ENCODE measurements at regions of chr11 and their contacts with region 1.

Region 1: GRCh38 chr11:14358729-14359439 is at the start of gene RRAS2:
- DNase-seq: peak; percentile 90
- ATAC-seq: peak; percentile 91
- H3K4me3 ChIP-seq: peak within 1 kb of the TSS; percentile 65 to 94 (median 88)
- H3K4me3 Mint-ChIP-seq: peak within 1 kb of the TSS; percentile 91
- H3K27ac ChIP-seq: peak within 1 kb of the TSS; percentile 52 to 76
- H3K27ac Mint-ChIP-seq: peak within 1 kb of the TSS; percentile 87
- H3K4me1 ChIP-seq: peaks cover 28 to 36% of the 10 kb centered on the region in 2 donors
- H3K4me1 Mint-ChIP-seq: peaks cover 43% of the 10 kb centered on the region
- H3K27me3 ChIP-seq: no peaks in the 10 kb centered on the region
- H3K27me3 Mint-ChIP-seq: no peaks in the 10 kb centered on the region
- CTCF ChIP-seq: no peak
- total RNA-seq, gene RRAS2: 72.4 and 80.1 TPM in 2 replicates

Region 2: GRCh38 chr11:14300661-14301304 is 58.1 kb before region 1 on chr11:
- CTCF ChIA-PET with region 1: interaction called, 8 read pairs
- POLR2A ChIA-PET with region 1: no interaction called
- intact Hi-C with region 1: loop called (anchors 1 kb)
- DNase-seq: peak; percentile 75
- ATAC-seq: peak; percentile 93
- H3K4me3 ChIP-seq: no peak overlapping the region
- H3K4me3 Mint-ChIP-seq: no peak overlapping the region
- H3K27ac ChIP-seq: no peak overlapping the region
- H3K27ac Mint-ChIP-seq: no peak overlapping the region
- H3K4me1 ChIP-seq: peaks cover 45 to 64% of the 10 kb centered on the region in 2 donors
- H3K4me1 Mint-ChIP-seq: peaks cover 59% of the 10 kb centered on the region
- H3K27me3 ChIP-seq: no peaks in the 10 kb centered on the region
- H3K27me3 Mint-ChIP-seq: no peaks in the 10 kb centered on the region
- CTCF ChIP-seq: peak; percentile 80

Region 3: GRCh38 chr11:14320020-14320419 is 38.9 kb before region 1 on chr11:
- CTCF ChIA-PET with region 1: interaction called, 5 read pairs
- POLR2A ChIA-PET with region 1: interaction called, 3 read pairs
- intact Hi-C with region 1: loop called (anchors 1 kb)
- DNase-seq: peak; percentile 58
- ATAC-seq: peak; percentile 28
- H3K4me3 ChIP-seq: peak overlapping the region in 3 of 5 experiments; percentile 12 to 36 (median 26)
- H3K4me3 Mint-ChIP-seq: peak overlapping the region; percentile 59
- H3K27ac ChIP-seq: peak overlapping the region; percentile 53 to 77
- H3K27ac Mint-ChIP-seq: peak overlapping the region; percentile 75
- H3K4me1 ChIP-seq: peaks cover 81 to 95% of the 10 kb centered on the region in 2 donors
- H3K4me1 Mint-ChIP-seq: peaks cover 88% of the 10 kb centered on the region
- H3K27me3 ChIP-seq: no peaks in the 10 kb centered on the region
- H3K27me3 Mint-ChIP-seq: no peaks in the 10 kb centered on the region
- CTCF ChIP-seq: no peak

Region 4: DNA sequence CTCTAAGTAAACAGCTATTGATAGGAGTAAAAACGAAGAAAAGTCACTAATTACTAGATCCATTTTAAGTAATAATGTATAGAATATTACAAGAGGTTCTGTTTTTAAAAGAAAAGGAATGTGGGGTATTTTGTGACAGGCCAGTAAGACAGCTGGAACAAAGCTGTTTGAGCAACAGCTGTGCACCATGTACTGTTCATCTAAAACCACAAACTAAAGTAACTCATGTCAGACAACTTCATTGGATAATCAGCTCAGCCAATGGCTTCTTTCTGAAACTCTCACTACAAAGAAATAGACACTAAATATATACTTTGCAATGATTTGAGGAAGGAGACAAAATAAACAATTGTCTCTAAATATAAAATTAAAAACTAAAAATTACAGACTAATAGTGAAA is 16.0 kb before region 1 on chr11:
- CTCF ChIA-PET with region 1: interaction called, 5 read pairs
- POLR2A ChIA-PET with region 1: interaction called, 5 read pairs
- intact Hi-C with region 1: loop called (anchors 1 kb)
- DNase-seq: no peak
- ATAC-seq: peak; percentile 31
- H3K4me3 ChIP-seq: no peak overlapping the region
- H3K4me3 Mint-ChIP-seq: no peak overlapping the region
- H3K27ac ChIP-seq: peak overlapping the region in 1 of 2 donors; percentile 76
- H3K27ac Mint-ChIP-seq: peak overlapping the region; percentile 20
- H3K4me1 ChIP-seq: peaks cover 50 to 68% of the 10 kb centered on the region in 2 donors
- H3K4me1 Mint-ChIP-seq: peaks cover 68% of the 10 kb centered on the region
- H3K27me3 ChIP-seq: no peaks in the 10 kb centered on the region
- H3K27me3 Mint-ChIP-seq: no peaks in the 10 kb centered on the region
- CTCF ChIP-seq: no peak

Region 5: GRCh38 chr11:14370496-14370895 is 11.6 kb after region 1 on chr11:
- CTCF ChIA-PET with region 1: interaction called, 3 read pairs
- POLR2A ChIA-PET with region 1: interaction called, 3 read pairs
- intact Hi-C with region 1: loop called (anchors 1 kb)
- DNase-seq: no peak
- ATAC-seq: no peak
- H3K4me3 ChIP-seq: no peak overlapping the region
- H3K4me3 Mint-ChIP-seq: no peak overlapping the region
- H3K27ac ChIP-seq: no peak overlapping the region
- H3K27ac Mint-ChIP-seq: no peak overlapping the region
- H3K4me1 ChIP-seq: peaks cover 18 to 20% of the 10 kb centered on the region in 2 donors
- H3K4me1 Mint-ChIP-seq: peaks cover 30% of the 10 kb centered on the region
- H3K27me3 ChIP-seq: no peaks in the 10 kb centered on the region
- H3K27me3 Mint-ChIP-seq: no peaks in the 10 kb centered on the region
- CTCF ChIP-seq: no peak

Region 6: GRCh38 chr11:14499554-14500180 is 140.8 kb after region 1 on chr11 and contains the start of gene COPB1:
- CTCF ChIA-PET with region 1: no interaction called
- POLR2A ChIA-PET with region 1: no interaction called
- intact Hi-C with region 1: loop called (anchors 5 kb)
- DNase-seq: peak; percentile 95
- ATAC-seq: peak; percentile 96
- H3K4me3 ChIP-seq: peak within 1 kb of the TSS; percentile 75 to 91 (median 86)
- H3K4me3 Mint-ChIP-seq: peak within 1 kb of the TSS; percentile 97
- H3K27ac ChIP-seq: peak within 1 kb of the TSS; percentile 76 to 85
- H3K27ac Mint-ChIP-seq: peak within 1 kb of the TSS; percentile 94
- H3K4me1 ChIP-seq: peaks cover 6 to 10% of the 10 kb centered on the region in 2 donors
- H3K4me1 Mint-ChIP-seq: peaks cover 36% of the 10 kb centered on the region
- H3K27me3 ChIP-seq: no peaks in the 10 kb centered on the region
- H3K27me3 Mint-ChIP-seq: no peaks in the 10 kb centered on the region
- CTCF ChIP-seq: no peak
- total RNA-seq, gene COPB1: 80.2 and 87.6 TPM in 2 replicates

Region 7: GRCh38 chr11:14892036-14892567 is 533.2 kb after region 1 on chr11 and contains the start of gene CYP2R1:
- CTCF ChIA-PET with region 1: no interaction called
- POLR2A ChIA-PET with region 1: no interaction called
- intact Hi-C with region 1: loop called (anchors 1 kb)
- DNase-seq: peak; percentile 93
- ATAC-seq: peak; percentile 85
- H3K4me3 ChIP-seq: peak within 1 kb of the TSS; percentile 82 to 91 (median 87)
- H3K4me3 Mint-ChIP-seq: peak within 1 kb of the TSS; percentile 99
- H3K27ac ChIP-seq: peak within 1 kb of the TSS; percentile 78 to 83
- H3K27ac Mint-ChIP-seq: peak within 1 kb of the TSS; percentile 97
- H3K4me1 ChIP-seq: peaks cover 4 to 5% of the 10 kb centered on the region in 2 donors
- H3K4me1 Mint-ChIP-seq: peaks cover 30% of the 10 kb centered on the region
- H3K27me3 ChIP-seq: no peaks in the 10 kb centered on the region
- H3K27me3 Mint-ChIP-seq: no peaks in the 10 kb centered on the region
- CTCF ChIP-seq: no peak
- total RNA-seq, gene CYP2R1: 42.4 and 43.6 TPM in 2 replicates

Region 8: DNA sequence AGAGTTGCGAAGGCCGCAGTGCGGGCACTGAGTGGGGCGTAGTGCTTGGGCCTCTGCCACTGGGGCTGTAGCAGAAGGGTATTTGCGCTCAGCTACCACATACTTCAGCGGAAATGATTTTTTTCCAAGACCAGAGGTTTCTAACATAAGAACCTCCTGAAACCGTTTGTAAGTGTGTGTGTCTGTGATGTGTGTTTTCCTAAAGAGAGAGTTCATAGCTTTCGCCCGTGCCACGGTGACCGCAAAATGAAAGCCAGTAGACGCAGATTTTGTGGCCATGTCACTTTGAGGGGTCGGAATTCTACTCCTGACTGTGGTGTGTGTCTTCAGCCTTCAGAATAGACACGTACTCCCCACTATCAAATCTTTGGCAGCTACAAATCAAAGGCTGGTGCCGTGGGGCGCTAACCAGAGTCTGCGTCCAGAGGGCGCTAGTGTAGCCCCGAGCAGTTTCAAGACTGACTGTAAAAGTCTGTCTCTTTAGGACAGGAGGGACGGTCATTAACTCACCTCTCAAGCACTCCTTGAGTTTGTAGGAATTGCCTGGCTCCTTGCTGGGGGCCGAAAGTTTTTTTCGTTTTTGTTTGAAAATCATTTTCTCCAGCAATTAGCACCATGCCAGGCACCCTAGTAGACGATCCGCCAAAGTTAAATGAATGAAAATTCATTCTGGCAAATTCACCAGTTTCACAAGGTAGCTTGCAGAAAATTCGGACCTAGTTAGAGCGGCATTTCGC is 615.8 kb after region 1 on chr11:
- CTCF ChIA-PET with region 1: no interaction called
- POLR2A ChIA-PET with region 1: no interaction called
- intact Hi-C with region 1: no loop called
- DNase-seq: peak; percentile 71
- ATAC-seq: peak; percentile 46
- H3K4me3 ChIP-seq: peak overlapping the region in 4 of 5 experiments; percentile 1 to 54 (median 32)
- H3K4me3 Mint-ChIP-seq: peak overlapping the region; percentile 87
- H3K27ac ChIP-seq: no peak overlapping the region
- H3K27ac Mint-ChIP-seq: no peak overlapping the region
- H3K4me1 ChIP-seq: peaks cover 37 to 41% of the 10 kb centered on the region in 2 donors
- H3K4me1 Mint-ChIP-seq: peaks cover 39% of the 10 kb centered on the region
- H3K27me3 ChIP-seq: peaks cover 0 to 73% (median 48%) of the 10 kb centered on the region in 4 experiments
- H3K27me3 Mint-ChIP-seq: peaks cover 75% of the 10 kb centered on the region
- CTCF ChIP-seq: peak; percentile 69